ENCODE measurements at regions of chr19 and their contacts with region 1.

Region 1: GRCh38 chr19:41439441-41440222 is at the start of gene DMAC2:
- DNase-seq: peak; percentile 97 to 98 (median 97)
- H3K4me3 ChIP-seq: peak within 1 kb of the TSS; percentile 71 to 100 (median 93)
- H3K27ac ChIP-seq: peak within 1 kb of the TSS; percentile 80 to 88
- H3K4me1 ChIP-seq: peaks cover 4 to 22% (median 13%) of the 10 kb centered on the region in 4 experiments
- H3K27me3 ChIP-seq: no peaks in the 10 kb centered on the region

Region 2: DNA sequence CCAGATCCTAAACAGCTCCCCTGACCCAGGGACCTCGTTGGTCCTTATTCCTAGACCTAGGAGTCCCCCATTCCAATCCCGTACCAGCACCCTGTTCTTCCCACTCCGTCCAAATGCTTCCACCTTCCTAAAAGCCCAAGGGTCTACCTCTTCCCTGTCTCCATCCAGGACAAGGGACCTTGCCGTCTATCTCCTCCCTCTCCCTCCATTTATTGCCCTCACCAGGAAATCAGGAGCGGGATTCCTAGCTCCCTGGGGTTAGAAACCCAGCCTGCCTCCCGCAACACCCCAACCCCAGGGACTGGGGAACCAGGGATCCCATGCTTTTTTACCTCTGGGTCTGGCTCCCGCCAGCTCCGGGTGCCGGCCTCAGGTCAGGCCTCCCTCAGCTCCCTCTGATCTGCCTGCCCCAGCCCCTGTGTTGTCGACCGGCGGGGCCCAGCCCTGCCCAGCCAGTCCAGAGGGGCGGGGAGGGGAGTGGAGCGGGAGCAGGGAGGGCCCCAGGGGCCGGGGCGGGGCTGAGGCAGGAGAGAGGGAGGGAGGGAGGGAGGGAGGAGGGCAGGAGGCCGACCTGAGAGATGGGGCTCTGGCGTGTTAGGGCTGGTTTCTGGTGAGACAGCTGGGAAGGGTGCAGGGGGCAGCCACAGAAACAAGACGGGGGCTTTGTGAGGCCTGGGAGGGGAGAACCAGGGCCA is 12.5 kb before region 1 on chr19 and contains the start of gene B3GNT8:
- CTCF ChIA-PET with region 1: interaction called, 14 read pairs
- POLR2A ChIA-PET with region 1: interaction called, 5 read pairs
- DNase-seq: peak; percentile 71 to 86 (median 82)
- H3K4me3 ChIP-seq: peak within 1 kb of the TSS; percentile 31 to 90 (median 70)
- H3K27ac ChIP-seq: peak within 1 kb of the TSS; percentile 66 to 86
- H3K4me1 ChIP-seq: peaks cover 4 to 68% (median 64%) of the 10 kb centered on the region in 4 experiments
- H3K27me3 ChIP-seq: no peaks in the 10 kb centered on the region

Region 3: DNA sequence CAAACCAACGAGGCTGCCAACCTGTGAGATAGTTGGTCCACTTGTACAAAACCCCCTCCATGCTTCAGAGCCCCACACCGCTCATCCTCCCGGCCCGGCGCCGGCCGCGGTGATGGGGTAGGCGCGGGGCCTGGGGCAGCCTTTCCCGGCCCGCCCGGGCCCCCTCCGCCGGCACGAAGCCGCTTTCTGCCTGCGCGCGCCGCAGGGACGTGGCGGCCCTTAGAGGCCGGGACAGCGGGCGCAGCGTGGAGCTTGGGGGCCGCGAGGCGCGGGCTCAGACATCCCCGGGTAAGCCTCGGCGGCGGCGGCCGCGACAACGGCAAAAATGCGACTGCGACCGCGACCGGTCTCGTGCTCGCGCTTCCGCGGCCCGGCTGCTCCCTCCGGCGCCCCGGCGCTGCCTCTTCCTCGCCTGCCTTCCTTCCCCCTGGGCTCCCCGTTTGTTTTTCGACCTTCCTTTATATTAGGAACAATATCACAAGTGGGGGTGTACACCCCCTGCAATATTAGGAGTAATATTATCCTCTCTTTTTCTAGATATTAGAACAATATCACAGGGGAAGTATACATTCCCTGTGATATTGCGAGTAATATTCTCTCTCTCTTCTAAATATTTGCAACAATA is 82.4 kb after region 1 on chr19:
- CTCF ChIA-PET with region 1: no interaction called
- POLR2A ChIA-PET with region 1: no interaction called
- DNase-seq: peak in 2 of 3 donors; percentile 53 to 65
- H3K4me3 ChIP-seq: peak overlapping the region in 6 of 7 experiments; percentile 32 to 78 (median 56)
- H3K27ac ChIP-seq: peak overlapping the region; percentile 54
- H3K4me1 ChIP-seq: peaks cover 5 to 24% (median 9%) of the 10 kb centered on the region in 4 experiments
- H3K27me3 ChIP-seq: peaks cover 0 to 3% (median 0%) of the 10 kb centered on the region in 5 experiments